Heart left ventricle (tissue), 16 donors: ENCODE measurements at regions of chr1 and their contacts with region 1.

Region 1: DNA sequence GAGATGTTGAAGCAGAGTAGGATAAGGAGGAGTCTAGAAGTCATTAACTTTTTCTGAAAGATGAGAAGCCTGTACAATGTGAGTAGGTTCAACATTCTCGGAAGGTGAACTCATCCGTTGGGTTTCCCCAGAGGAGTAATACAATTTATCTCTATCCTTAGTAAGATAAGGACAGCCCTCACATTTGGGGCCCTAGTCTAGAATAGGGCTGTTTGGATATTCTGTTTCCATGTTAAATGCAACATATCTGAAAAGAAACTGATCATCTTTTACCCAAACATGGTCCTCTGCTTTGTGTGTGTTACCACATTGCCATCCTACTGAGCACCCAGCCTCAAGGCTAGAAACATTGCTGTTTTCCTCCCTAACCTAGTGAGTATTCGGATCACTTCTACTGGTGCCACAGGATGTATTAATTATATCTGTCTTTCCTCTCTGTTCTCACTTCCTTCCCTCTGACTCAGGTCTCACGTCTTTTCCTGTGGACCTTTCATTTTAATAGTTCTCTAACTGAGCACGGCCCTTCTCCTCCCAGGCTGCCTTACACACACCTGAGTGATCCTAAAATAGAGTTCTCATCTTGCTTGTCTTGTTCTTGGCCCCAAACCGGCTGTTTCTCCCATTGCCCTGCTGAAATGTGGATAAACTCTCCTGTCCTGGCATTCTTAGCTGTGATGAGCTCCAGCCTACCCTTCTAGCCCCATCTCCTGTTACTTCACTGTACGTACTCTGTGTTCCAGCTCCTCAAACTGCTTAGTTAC is 91.7 kb downstream of the CDC14A start:
- DNase-seq: no peak
- ATAC-seq: peak in 2 of 4 donors; percentile 59 to 86
- H3K4me3 ChIP-seq: peak overlapping the region in 1 of 12 donors; percentile 5
- H3K27ac ChIP-seq: peak overlapping the region in 10 of 12 donors; percentile 9 to 84 (median 44)
- H3K4me1 ChIP-seq: peaks cover 0 to 56% (median 9%) of the 10 kb centered on the region in 12 donors
- H3K27me3 ChIP-seq: no peaks in the 10 kb centered on the region
- CTCF ChIP-seq: peak in 1 of 12 donors; percentile 14
- POLR2A ChIP-seq: no peak

Region 2: GRCh38 chr1:100277866-100278265 is 166.1 kb before region 1 on chr1:
- intact Hi-C with region 1: loop called in 1 of 10 experiments (anchors 10 kb)
- DNase-seq: no peak
- ATAC-seq: no peak
- H3K4me3 ChIP-seq: no peak overlapping the region
- H3K27ac ChIP-seq: no peak overlapping the region
- H3K4me1 ChIP-seq: peaks cover 0 to 14% (median 3%) of the 10 kb centered on the region in 12 donors
- H3K27me3 ChIP-seq: no peaks in the 10 kb centered on the region
- CTCF ChIP-seq: no peak
- POLR2A ChIP-seq: no peak